Calu3 (cell line): ENCODE measurements at regions of chr19 and their contacts with region 1.

Region 1: GRCh38 chr19:42529248-42529764 is 1.0 kb upstream of the CEACAM1 start:
- DNase-seq: peak; percentile 87
- H3K4me3 Mint-ChIP-seq: peak overlapping the region; percentile 65
- H3K27ac Mint-ChIP-seq: peak overlapping the region; percentile 46
- H3K4me1 Mint-ChIP-seq: peaks cover 40% of the 10 kb centered on the region
- H3K27me3 Mint-ChIP-seq: no peaks in the 10 kb centered on the region
- CTCF ChIP-seq: peak; percentile 96

Region 2: DNA sequence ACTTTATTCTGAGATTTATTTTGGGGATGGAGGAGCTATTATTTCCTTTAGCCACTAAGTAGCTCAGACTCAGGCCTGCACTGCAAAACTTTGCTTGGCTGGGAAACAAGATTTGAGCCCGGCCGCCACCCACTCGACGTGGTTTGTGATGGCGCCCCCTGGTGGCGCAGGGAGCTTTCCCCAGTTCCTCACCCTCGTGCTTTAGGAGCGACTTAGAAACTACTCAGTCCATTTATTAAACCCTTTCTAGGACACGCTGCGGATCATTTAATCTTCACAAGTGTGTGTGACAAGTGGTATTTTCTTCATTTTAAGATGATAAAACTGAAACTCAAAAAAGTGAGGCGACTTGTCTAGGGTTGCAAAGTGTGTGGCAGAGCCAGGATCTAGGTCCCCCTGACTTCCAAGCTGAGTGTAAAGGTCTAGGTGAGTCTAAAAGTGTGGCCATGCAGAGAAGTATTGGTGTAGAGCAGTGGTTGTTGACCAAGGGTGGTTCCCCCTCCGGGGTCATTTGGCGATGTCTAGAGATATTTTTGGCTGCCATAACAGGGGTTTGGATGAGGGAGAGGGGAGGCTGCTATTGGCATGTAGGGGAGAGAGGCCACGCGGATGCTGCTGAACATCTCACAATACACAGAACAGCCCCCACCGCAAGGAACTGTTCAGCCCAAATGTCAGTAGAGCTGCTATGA is 88.8 kb before region 1 on chr19:
- CTCF ChIA-PET with region 1: interaction called, 22 read pairs
- intact Hi-C with region 1: no loop called
- DNase-seq: peak; percentile 92
- H3K4me3 Mint-ChIP-seq: peak overlapping the region; percentile 17
- H3K27ac Mint-ChIP-seq: peak overlapping the region; percentile 37
- H3K4me1 Mint-ChIP-seq: peaks cover 55% of the 10 kb centered on the region
- H3K27me3 Mint-ChIP-seq: no peaks in the 10 kb centered on the region
- CTCF ChIP-seq: peak; percentile 93

Region 3: GRCh38 chr19:42450314-42450934 is 78.9 kb before region 1 on chr19:
- CTCF ChIA-PET with region 1: interaction called, 65 read pairs
- intact Hi-C with region 1: loop called (anchors 1 kb)
- DNase-seq: peak; percentile 85
- H3K4me3 Mint-ChIP-seq: no peak overlapping the region
- H3K27ac Mint-ChIP-seq: no peak overlapping the region
- H3K4me1 Mint-ChIP-seq: peaks cover 16% of the 10 kb centered on the region
- H3K27me3 Mint-ChIP-seq: no peaks in the 10 kb centered on the region
- CTCF ChIP-seq: peak; percentile 98

Region 4: DNA sequence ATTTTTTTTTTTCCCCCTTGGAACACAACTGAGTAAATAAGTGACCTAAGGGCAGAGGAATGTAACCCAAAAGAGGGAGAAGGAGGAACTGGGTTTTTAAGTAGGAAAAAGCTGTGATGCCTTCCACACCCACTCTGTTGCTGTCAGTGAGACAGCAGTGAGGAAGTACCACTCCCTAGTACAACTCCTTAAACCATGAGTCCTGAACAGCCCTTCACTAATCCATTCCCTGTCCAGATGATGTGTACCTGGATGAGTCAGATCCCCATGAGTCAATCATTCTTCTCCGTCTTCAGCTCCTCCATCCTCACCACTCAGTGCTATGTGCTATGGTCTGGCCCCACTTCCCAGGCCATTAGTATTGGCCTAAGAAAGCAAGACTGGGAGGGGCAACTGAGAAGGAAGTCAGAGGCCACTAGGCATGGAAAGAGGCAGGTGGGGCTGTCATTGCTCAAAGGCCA is 73.7 kb before region 1 on chr19:
- CTCF ChIA-PET with region 1: interaction called, 65 read pairs
- intact Hi-C with region 1: loop called (anchors 1 kb)
- DNase-seq: peak; percentile 82
- H3K4me3 Mint-ChIP-seq: no peak overlapping the region
- H3K27ac Mint-ChIP-seq: peak overlapping the region; percentile 82
- H3K4me1 Mint-ChIP-seq: peaks cover 46% of the 10 kb centered on the region
- H3K27me3 Mint-ChIP-seq: no peaks in the 10 kb centered on the region
- CTCF ChIP-seq: no peak

Region 5: DNA sequence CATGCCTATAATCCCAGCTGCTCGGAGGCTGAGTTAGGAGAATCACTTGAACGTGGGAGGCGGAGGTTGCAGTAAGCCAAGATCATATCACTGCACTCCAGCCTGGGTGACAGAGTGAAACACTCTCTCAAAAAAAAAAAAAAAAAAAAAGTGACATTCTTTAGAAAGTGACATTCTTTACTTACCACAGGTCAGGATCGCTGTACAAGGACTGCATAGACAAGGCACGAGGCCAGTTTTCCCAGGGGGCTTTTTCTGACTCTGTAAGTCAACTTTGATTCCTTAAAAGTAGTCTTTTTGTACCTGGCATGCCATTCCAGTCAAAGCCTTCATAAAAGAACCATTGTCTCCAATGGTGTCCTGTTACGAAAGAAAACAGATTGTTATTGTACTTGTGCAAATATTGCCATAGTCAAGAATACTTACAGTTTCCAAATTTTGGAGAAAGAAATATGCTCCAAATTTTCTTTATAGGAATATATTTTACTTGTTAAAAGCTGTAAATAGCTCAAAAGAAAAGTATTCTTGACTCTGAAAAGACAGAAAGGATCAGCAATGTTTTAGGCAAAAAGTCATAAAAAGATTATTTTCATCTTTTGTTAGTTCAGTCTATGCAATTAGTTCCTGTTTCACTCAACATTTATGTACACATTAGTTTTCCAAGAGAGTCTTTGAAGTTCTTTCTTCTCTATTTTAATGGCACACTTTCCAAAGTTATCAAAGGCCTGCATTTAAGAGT is 40.4 kb before region 1 on chr19:
- CTCF ChIA-PET with region 1: interaction called, 4 read pairs
- intact Hi-C with region 1: loop called (anchors 2 kb)
- DNase-seq: peak; percentile 84
- H3K4me3 Mint-ChIP-seq: no peak overlapping the region
- H3K27ac Mint-ChIP-seq: peak overlapping the region; percentile 65
- H3K4me1 Mint-ChIP-seq: peaks cover 19% of the 10 kb centered on the region
- H3K27me3 Mint-ChIP-seq: no peaks in the 10 kb centered on the region
- CTCF ChIP-seq: no peak

Region 6: GRCh38 chr19:42497492-42498168 is 31.7 kb before region 1 on chr19:
- CTCF ChIA-PET with region 1: interaction called, 12 read pairs
- intact Hi-C with region 1: loop called (anchors 2 kb)
- DNase-seq: peak; percentile 70
- H3K4me3 Mint-ChIP-seq: peak overlapping the region; percentile 22
- H3K27ac Mint-ChIP-seq: peak overlapping the region; percentile 77
- H3K4me1 Mint-ChIP-seq: peaks cover 33% of the 10 kb centered on the region
- H3K27me3 Mint-ChIP-seq: no peaks in the 10 kb centered on the region
- CTCF ChIP-seq: no peak

Region 7: GRCh38 chr19:42563352-42564210 is 34.3 kb after region 1 on chr19:
- CTCF ChIA-PET with region 1: no interaction called
- intact Hi-C with region 1: no loop called
- DNase-seq: peak; percentile 54
- H3K4me3 Mint-ChIP-seq: no peak overlapping the region
- H3K27ac Mint-ChIP-seq: no peak overlapping the region
- H3K4me1 Mint-ChIP-seq: no peaks in the 10 kb centered on the region
- H3K27me3 Mint-ChIP-seq: peaks cover 70% of the 10 kb centered on the region
- CTCF ChIP-seq: peak; percentile 20

Region 8: GRCh38 chr19:42634409-42635232 is 105.3 kb after region 1 on chr19:
- CTCF ChIA-PET with region 1: no interaction called
- intact Hi-C with region 1: no loop called
- DNase-seq: peak; percentile 81
- H3K4me3 Mint-ChIP-seq: no peak overlapping the region
- H3K27ac Mint-ChIP-seq: no peak overlapping the region
- H3K4me1 Mint-ChIP-seq: no peaks in the 10 kb centered on the region
- H3K27me3 Mint-ChIP-seq: peaks cover 68% of the 10 kb centered on the region
- CTCF ChIP-seq: peak; percentile 76